GM10248 (cell line): ENCODE measurements at regions of chr9 and their contacts with region 1.

Region 1: GRCh38 chr9:34989003-34989945 is at the start of gene DNAJB5:
- DNase-seq: peak; percentile 97
- CTCF ChIP-seq: no peak

Region 2: GRCh38 chr9:34578241-34579103 is 410.8 kb before region 1 on chr9:
- CTCF ChIA-PET with region 1: no interaction called
- POLR2A ChIA-PET with region 1: no interaction called
- DNase-seq: no peak
- CTCF ChIP-seq: no peak

Region 3: DNA sequence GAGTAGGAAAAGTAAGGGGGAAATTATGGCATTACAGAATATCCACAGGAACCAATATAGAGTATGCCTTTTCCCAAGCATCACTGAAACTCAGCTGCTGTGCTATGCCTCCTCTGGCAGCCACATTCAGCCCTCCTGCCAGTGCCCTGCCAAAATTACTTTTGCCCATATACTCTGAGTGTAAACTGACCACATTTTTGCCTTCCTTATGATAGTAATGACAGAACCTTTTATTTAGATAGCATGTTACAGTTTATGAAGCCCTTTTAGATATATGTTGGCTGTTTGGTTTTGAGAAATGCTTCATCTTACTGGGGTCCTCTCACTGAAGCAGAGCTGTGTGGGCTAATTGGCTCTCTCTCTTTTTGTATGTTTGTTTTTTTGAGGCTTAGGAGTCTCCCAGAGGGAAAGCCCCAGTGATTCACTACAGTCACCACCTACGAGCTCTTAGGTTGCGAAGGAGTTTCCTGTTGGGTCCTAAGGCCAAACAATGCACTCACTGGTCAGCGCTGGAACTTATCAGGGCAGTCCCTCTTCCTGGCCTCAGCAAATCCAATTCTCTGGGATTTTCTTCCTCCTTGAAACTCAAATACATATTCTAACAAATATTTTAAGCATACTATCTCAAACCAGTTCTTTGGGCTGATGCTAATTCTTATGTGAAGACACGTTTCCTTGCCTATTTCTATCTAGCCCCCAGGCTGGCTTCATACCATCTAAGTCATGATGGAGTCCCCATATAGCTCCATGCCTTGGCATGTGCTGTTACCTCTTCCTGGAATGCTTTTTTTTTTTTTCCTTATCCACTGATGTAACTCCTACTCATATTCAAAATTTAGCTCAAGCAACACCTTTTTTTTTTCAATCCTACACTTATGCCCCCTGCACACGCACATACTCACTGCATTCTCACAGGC is 27.4 kb before region 1 on chr9:
- CTCF ChIA-PET with region 1: interaction called, 17 read pairs
- POLR2A ChIA-PET with region 1: no interaction called
- DNase-seq: no peak
- CTCF ChIP-seq: no peak

Region 4: DNA sequence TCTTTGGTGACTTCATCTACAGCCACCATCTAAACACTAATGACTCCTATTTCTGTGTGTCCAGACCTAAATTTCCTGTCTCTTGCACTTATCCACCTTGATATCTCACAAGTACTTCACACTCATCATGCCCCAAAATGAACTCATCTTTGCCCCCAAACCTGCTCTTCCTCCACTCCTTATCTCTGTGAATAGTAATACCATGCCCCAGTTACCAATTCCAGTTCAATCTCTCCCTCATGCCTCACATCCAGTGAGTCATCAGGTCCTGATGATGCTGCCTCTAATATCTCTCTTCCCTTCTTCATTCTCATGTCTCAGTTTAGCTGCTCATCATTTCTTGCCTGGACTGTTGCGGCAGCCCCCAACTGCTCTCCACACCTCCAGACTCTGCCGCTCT is 14.6 kb before region 1 on chr9:
- CTCF ChIA-PET with region 1: interaction called, 13 read pairs
- POLR2A ChIA-PET with region 1: no interaction called
- DNase-seq: no peak
- CTCF ChIP-seq: no peak

Region 5: DNA sequence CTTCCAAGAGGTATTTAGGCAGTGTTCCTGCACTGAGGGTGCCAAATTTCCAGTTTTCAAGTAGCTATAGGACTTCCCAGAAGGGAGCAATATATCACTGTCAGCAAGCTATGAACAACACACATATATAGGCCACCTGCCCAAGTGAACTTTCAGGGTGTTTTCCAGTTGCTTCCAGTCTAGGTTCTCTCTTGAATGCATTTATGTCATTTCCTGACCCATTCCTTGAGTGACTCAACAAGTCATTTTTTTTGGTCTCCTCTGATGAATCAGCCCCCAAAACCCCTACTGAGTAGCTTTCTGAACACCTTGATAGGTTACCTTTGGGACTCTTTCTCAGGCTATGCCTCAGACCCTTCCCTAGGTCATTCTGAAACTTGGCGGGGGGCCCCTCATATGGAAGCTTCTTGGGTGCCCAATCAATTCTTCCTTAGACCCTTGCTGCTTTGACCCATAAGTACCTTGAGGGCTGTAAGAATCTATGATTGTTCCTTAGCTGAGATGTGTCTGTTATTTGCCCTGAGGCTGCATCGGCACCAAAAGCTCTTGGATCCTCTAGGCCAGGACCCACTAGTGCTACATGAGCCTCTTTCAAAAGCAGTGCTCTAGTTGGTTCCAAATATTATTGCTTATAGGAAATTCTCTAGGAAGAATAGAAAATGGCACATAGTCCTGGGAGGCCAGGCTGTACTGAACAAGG is 12.7 kb after region 1 on chr9:
- CTCF ChIA-PET with region 1: interaction called, 42 read pairs
- POLR2A ChIA-PET with region 1: interaction called, 3 read pairs
- DNase-seq: peak; percentile 24
- CTCF ChIP-seq: no peak